Dorsolateral prefrontal cortex (tissue), 120 donors: ENCODE measurements at regions of chr13 and their contacts with region 1.

Region 1: DNA sequence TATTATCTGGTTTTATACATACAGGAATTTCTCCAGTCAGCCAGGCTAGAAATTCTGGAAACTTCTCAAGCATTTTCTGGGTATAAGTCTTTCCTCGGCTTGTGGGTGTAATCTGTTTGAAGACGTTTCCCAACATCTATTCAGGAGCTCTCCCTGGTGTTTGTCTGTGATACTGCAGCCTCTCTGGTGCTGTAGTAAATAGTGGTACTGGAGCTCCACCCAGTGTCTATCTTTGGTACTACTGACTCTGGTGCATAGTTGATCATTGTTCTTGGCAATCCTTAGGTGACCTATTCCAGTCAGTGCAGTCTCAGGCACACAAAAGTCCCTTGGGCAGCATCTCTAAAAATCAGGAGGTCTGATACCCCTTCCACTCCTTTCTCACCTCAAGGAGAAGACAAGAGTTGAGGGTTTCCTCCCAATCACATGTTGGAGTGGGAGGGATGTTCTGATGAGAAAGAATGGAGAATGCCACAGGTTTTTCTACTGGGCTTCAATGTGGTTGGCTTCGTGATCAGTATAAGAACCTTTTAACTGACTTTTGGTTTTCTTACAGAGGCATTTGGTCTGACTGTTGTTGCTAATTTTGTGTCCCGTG is 115.5 kb downstream of the CYSLTR2 start:
- DNase-seq: peak in 6 of 10 donors; percentile 29 to 86 (median 56)
- H3K4me3 ChIP-seq: no peak overlapping the region
- H3K27ac ChIP-seq: peak overlapping the region in 1 of 59 donors; percentile 46
- H3K27me3 ChIP-seq: no peaks in the 10 kb centered on the region
- CTCF ChIP-seq: peak; percentile 43 to 100 (median 98)

Region 2: DNA sequence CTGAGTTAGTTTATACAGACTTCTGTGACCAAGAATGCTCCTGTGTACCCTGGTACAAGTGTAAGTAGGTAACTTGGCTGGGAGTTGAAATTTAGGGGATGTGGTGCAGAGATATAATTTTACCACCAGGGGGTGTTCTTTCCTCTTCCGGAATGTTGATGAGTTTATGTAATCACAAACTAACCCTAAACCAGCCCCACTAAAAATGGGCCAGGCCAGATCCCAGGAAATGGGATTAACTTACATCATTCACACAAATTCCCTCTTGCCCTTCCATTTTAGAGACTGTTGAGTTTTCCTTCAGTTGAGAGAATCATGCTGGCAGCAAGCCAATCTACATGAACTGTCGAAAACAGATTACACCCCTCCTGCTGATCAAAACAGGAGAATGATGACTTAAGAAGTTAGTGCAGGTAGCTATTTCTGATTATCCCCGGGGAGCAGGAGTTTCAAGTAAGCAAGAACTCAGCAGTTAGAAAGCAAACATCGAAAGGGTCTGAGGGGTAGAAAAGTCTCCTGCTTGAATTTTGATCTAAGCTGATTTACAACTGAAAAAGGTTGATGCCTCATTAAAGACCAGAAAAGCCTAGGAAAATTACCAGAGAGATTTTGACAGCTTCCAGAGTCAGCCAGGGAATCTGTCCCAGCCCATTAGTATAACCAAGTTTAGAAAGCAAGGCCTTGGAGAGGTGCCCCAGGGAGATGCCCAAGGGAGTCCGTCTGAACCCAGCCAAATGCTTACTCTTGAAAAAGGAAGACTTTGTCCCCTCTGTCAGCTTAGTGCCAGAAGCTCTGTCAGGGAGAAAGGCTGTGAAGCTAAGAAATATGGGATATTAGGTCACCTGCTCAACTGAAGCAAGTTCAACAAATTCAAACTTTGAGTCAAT is 642.0 kb before region 1 on chr13:
- intact Hi-C with region 1: loop called in 1 of 2 experiments (anchors 5 kb)
- DNase-seq: peak in 2 of 10 donors; percentile 31 to 80
- H3K4me3 ChIP-seq: peak overlapping the region in 16 of 59 donors; percentile 0 to 39 (median 14)
- H3K27ac ChIP-seq: peak overlapping the region in 53 of 59 donors; percentile 1 to 89 (median 69)
- H3K27me3 ChIP-seq: no peaks in the 10 kb centered on the region
- CTCF ChIP-seq: peak; percentile 66 to 98 (median 84)

Region 3: DNA sequence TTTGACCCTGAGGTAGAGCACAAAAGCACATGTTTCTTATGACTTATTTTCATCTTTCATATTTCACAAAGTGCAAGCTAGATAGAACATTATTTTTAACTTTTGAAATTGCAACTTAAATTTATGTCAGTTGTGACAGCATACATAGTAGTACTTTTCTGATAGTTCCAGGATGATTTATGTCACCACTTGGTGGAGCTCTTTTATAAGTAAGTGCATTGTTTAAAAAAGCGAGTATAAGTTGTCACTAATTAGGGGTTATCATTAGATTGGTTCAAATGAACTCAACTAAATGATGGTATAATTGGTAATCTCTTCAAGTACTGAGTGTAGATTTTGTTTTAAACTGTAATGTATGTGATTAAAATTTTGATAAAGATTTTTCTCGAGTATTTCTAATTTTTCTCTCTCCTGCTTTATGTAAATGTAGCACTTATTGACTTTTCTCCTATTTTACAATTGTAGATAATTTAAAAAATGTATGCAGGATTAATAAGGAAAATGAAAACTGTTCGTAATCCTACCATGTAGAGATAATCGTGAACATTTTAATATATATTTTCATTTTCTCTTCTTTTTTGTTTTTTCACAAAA is 434.6 kb before region 1 on chr13:
- intact Hi-C with region 1: loop called in 1 of 2 experiments (anchors 10 kb)
- DNase-seq: no peak
- H3K4me3 ChIP-seq: no peak overlapping the region
- H3K27ac ChIP-seq: no peak overlapping the region
- H3K27me3 ChIP-seq: no peaks in the 10 kb centered on the region
- CTCF ChIP-seq: peak; percentile 40 to 90 (median 76)

Region 4: GRCh38 chr13:48595431-48596429 is 173.5 kb before region 1 on chr13:
- intact Hi-C with region 1: loop called (anchors 1 to 5 kb)
- DNase-seq: peak in 8 of 10 donors; percentile 34 to 60 (median 46)
- H3K4me3 ChIP-seq: no peak overlapping the region
- H3K27ac ChIP-seq: no peak overlapping the region
- H3K27me3 ChIP-seq: no peaks in the 10 kb centered on the region
- CTCF ChIP-seq: peak; percentile 25 to 84 (median 70)

Region 5: DNA sequence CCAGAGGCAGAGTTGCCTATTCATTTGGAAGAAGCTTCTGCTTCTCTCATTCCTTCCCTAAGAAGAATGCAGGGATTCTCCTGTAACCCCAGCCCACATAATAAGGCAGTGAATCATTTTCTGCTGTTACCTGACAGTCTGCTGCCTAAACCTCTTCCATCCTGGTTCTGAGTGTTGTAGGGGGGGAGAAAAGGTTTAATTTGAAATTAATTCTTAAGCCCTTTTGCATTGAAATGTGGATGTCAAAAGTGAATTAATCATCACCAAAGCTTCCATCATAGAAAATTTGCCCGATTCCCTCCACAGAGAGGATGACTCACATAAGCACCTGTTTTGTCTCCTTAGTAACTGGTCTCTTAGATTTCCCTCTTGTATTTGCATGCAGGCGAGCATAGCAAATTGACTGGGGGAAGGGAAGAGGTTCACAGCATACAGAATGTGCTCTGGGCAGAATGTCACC is 59.8 kb after region 1 on chr13:
- intact Hi-C with region 1: no loop called
- DNase-seq: no peak
- H3K4me3 ChIP-seq: no peak overlapping the region
- H3K27ac ChIP-seq: peak overlapping the region in 20 of 59 donors; percentile 7 to 63 (median 38)
- H3K27me3 ChIP-seq: no peaks in the 10 kb centered on the region
- CTCF ChIP-seq: no peak